Activated CD4-positive, alpha-beta T cell treated with anti-CD3 and anti-CD28 coated beads, Interleukin-2, amount 10 ng/mL, durations not matched to agents 24 days and 14 days (primary cell): ENCODE measurements at regions of chr10 and their contacts with region 1.

Region 1: DNA sequence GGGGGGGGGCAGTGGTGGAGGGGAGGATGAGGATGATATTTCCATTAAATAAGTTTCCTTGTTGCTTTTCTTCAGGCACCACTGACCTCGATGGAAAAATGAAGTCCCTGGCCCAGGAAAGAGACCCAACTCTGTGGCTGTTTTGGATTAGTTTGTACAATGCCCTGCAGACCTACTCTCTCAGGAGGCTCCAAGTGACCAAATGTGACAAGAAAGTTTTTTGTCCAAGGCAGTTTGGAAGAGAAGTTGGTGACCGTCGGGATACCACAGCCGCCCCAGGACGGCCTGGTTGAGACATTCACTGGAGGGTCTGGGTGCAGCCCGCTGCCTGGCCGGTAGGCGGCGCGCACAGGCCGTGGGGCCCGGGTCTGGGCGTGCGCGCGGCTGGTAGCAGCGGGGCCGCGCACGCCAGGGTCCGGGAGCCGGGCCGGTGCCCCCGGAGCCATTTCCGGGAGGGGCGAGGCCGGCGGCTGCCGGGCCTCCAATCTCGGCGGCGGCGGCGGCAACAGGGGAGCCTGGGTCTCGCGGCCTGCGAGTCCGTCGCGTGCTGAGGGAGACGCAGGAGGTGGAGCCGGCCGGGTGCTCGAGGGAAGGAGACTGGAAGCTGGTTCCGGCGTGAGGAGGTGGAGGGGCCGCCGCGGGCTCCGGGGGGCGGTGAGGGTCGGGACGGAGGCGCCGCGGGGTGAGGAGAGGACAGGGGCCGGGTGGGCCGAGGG is at the start of gene SGPL1:
- DNase-seq: peak; percentile 96
- H3K4me3 Mint-ChIP-seq: peak within 1 kb of the TSS; percentile 97
- H3K27ac Mint-ChIP-seq: peak within 1 kb of the TSS; percentile 90
- H3K4me1 Mint-ChIP-seq: peaks cover 26% of the 10 kb centered on the region
- H3K27me3 Mint-ChIP-seq: no peaks in the 10 kb centered on the region
- total RNA-seq, gene SGPL1: 94.0 and 98.9 TPM in 2 replicates

Region 2: GRCh38 chr10:70493660-70494234 is 321.9 kb before region 1 on chr10:
- intact Hi-C with region 1: no loop called
- DNase-seq: peak; percentile 63
- H3K4me3 Mint-ChIP-seq: no peak overlapping the region
- H3K27ac Mint-ChIP-seq: peak overlapping the region; percentile 25
- H3K4me1 Mint-ChIP-seq: peaks cover 23% of the 10 kb centered on the region
- H3K27me3 Mint-ChIP-seq: peaks cover 19% of the 10 kb centered on the region

Region 3: GRCh38 chr10:70549962-70550458 is 265.7 kb before region 1 on chr10:
- intact Hi-C with region 1: loop called (anchors 2 kb)
- DNase-seq: peak; percentile 92
- H3K4me3 Mint-ChIP-seq: no peak overlapping the region
- H3K27ac Mint-ChIP-seq: no peak overlapping the region
- H3K4me1 Mint-ChIP-seq: no peaks in the 10 kb centered on the region
- H3K27me3 Mint-ChIP-seq: peaks cover 1% of the 10 kb centered on the region

Region 4: DNA sequence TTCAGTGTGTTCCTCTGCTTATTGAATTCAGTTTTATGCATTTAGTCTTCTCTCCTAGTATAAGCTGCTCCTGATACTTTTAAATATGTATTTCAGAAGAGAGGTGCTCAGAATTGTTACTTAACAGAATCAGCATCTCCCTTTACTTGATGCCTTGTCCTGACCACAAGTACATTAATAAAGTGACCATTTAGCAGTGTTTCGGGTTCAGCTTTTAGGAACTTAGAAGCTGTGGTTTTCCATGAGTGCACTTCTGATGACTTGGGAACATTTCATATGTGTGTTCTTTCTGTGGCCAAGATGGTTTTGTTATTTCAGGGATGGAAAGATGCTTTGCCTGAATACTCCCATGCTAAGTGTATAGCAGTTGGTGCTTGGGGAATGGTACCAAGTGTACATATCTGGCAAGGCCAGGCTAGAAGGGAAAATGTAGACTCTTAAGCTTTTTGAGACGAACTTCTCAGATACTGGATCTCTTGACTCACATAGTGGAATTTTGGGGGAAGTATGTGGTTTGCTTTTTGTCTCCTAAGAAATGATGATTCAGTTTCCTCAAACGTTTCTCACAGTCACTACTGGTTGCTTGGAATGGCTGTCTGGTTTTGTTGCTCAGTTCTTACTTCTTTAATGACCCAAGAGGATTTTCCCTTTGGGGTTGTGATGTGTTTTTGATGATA is 17.3 kb after region 1 on chr10:
- intact Hi-C with region 1: loop called (anchors 1 kb)
- DNase-seq: no peak
- H3K4me3 Mint-ChIP-seq: peak overlapping the region; percentile 68
- H3K27ac Mint-ChIP-seq: peak overlapping the region; percentile 86
- H3K4me1 Mint-ChIP-seq: peaks cover 42% of the 10 kb centered on the region
- H3K27me3 Mint-ChIP-seq: no peaks in the 10 kb centered on the region

Region 5: DNA sequence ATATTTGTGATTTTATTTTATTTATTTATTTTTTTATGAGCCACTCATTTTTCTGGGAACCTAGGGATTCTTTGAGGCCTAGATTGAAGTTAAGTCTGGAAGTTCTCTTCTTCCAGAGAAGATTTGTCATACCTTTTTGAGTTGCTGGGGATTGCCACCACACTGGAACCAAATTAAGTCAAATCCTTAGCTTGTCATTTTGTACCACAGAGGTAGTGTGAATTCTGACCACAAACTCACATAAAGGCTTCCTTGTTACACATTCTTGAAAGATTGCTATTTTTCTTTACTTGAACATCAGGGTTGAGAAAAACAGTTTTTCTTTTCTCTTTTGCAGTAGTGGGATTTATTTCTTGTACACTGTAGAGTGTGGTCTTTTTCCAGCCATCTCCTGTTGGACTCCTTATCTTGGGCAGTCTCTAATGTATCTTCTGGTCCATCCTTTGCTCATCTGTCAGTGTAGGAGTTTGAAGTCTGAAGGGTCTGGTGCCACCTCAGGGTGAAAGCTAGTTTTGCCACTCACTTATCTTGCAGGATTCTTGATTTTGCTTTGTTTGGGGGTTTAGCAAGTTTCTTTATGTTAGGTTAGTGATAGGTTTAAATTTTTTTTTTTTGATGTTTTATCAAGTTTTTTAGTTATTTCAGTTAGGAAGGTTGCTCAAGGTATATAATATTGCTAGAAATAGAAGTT is 48.0 kb after region 1 on chr10:
- intact Hi-C with region 1: loop called (anchors 5 kb)
- DNase-seq: peak; percentile 18
- H3K4me3 Mint-ChIP-seq: no peak overlapping the region
- H3K27ac Mint-ChIP-seq: peak overlapping the region; percentile 60
- H3K4me1 Mint-ChIP-seq: peaks cover 16% of the 10 kb centered on the region
- H3K27me3 Mint-ChIP-seq: no peaks in the 10 kb centered on the region

Region 6: DNA sequence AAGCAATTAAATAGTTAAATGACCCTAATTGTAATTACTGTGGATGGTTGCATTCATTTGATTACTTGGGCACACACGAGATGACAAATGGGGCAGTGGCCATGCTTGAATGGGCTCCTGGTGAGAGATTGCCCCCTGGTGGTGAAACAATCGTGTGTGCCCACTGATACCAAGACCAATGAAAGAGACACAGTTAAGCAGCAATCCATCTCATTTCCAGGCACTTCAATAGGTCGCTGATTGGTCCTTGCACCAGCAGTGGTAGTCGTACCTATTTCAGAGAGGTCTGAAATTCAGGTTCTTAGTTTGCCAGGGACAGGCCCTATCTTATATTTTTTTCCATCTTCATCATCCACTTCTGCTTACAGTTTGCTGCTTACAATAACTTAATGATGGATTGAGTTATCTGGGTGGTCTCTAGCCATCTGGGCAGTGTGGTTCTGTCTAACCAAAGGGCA is 64.4 kb after region 1 on chr10:
- intact Hi-C with region 1: loop called (anchors 1 kb)
- DNase-seq: peak; percentile 92
- H3K4me3 Mint-ChIP-seq: no peak overlapping the region
- H3K27ac Mint-ChIP-seq: no peak overlapping the region
- H3K4me1 Mint-ChIP-seq: peaks cover 11% of the 10 kb centered on the region
- H3K27me3 Mint-ChIP-seq: no peaks in the 10 kb centered on the region